ENCODE measurements at regions of chr3 and their contacts with region 1.

Region 1: GRCh38 chr3:28077572-28077971 is 163.8 kb upstream of the CMC1 start:
- DNase-seq: peak; percentile 25
- ATAC-seq: peak; percentile 86
- H3K4me3 ChIP-seq: no peak overlapping the region
- H3K27ac ChIP-seq: no peak overlapping the region
- H3K4me1 ChIP-seq: no peaks in the 10 kb centered on the region
- H3K27me3 ChIP-seq: no peaks in the 10 kb centered on the region
- CTCF ChIP-seq: peak; percentile 38
- EP300 ChIP-seq: no peak
- POLR2A ChIP-seq: no peak
- RAD21 ChIP-seq: no peak

Region 2: GRCh38 chr3:28104896-28105534 is 27.4 kb after region 1 on chr3:
- CTCF ChIA-PET with region 1: no interaction called
- POLR2A ChIA-PET with region 1: no interaction called
- in situ Hi-C with region 1: no loop called
- intact Hi-C with region 1: no loop called
- DNase-seq: no peak
- ATAC-seq: no peak
- H3K4me3 ChIP-seq: no peak overlapping the region
- H3K27ac ChIP-seq: no peak overlapping the region
- H3K4me1 ChIP-seq: peaks cover 8% of the 10 kb centered on the region
- H3K27me3 ChIP-seq: no peaks in the 10 kb centered on the region
- CTCF ChIP-seq: no peak
- EP300 ChIP-seq: no peak
- POLR2A ChIP-seq: no peak
- RAD21 ChIP-seq: no peak

Region 3: GRCh38 chr3:28151608-28152228 is 74.1 kb after region 1 on chr3:
- CTCF ChIA-PET with region 1: no interaction called
- POLR2A ChIA-PET with region 1: no interaction called
- in situ Hi-C with region 1: no loop called
- intact Hi-C with region 1: no loop called
- DNase-seq: no peak
- ATAC-seq: no peak
- H3K4me3 ChIP-seq: no peak overlapping the region
- H3K27ac ChIP-seq: no peak overlapping the region
- H3K4me1 ChIP-seq: no peaks in the 10 kb centered on the region
- H3K27me3 ChIP-seq: no peaks in the 10 kb centered on the region
- CTCF ChIP-seq: no peak
- EP300 ChIP-seq: no peak
- POLR2A ChIP-seq: no peak
- RAD21 ChIP-seq: no peak

Region 4: GRCh38 chr3:28286595-28286994 is 209.0 kb after region 1 on chr3:
- CTCF ChIA-PET with region 1: no interaction called
- POLR2A ChIA-PET with region 1: no interaction called
- in situ Hi-C with region 1: no loop called
- intact Hi-C with region 1: loop called (anchors 1 kb)
- DNase-seq: peak; percentile 34
- ATAC-seq: peak; percentile 80
- H3K4me3 ChIP-seq: no peak overlapping the region
- H3K27ac ChIP-seq: no peak overlapping the region
- H3K4me1 ChIP-seq: no peaks in the 10 kb centered on the region
- H3K27me3 ChIP-seq: no peaks in the 10 kb centered on the region; a peak in 1 of 5 replicates
- CTCF ChIP-seq: peak; percentile 42
- EP300 ChIP-seq: no peak
- POLR2A ChIP-seq: no peak
- RAD21 ChIP-seq: no peak